ENCODE measurements at regions of chr14 and their contacts with region 1.

Region 1: GRCh38 chr14:101947906-101948665 is 16.3 kb upstream of the DYNC1H1 start:
- DNase-seq: peak; percentile 100
- H3K4me3 ChIP-seq: peak overlapping the region; percentile 50 to 97 (median 84)
- H3K27ac ChIP-seq: peak overlapping the region; percentile 89 to 100 (median 96)
- H3K4me1 ChIP-seq: peaks cover 14 to 18% of the 10 kb centered on the region in 2 donors
- H3K27me3 ChIP-seq: no peaks in the 10 kb centered on the region
- CTCF ChIP-seq: peak in 2 of 6 experiments; percentile 9 to 21
- POLR2A ChIP-seq: peak; percentile 77 to 94

Region 2: GRCh38 chr14:101767618-101768362 is 180.3 kb before region 1 on chr14:
- intact Hi-C with region 1: loop called (anchors 5 kb)
- DNase-seq: no peak
- H3K4me3 ChIP-seq: no peak overlapping the region
- H3K27ac ChIP-seq: no peak overlapping the region
- H3K4me1 ChIP-seq: peaks cover 0 to 32% of the 10 kb centered on the region in 2 donors
- H3K27me3 ChIP-seq: no peaks in the 10 kb centered on the region
- CTCF ChIP-seq: no peak
- POLR2A ChIP-seq: no peak

Region 3: DNA sequence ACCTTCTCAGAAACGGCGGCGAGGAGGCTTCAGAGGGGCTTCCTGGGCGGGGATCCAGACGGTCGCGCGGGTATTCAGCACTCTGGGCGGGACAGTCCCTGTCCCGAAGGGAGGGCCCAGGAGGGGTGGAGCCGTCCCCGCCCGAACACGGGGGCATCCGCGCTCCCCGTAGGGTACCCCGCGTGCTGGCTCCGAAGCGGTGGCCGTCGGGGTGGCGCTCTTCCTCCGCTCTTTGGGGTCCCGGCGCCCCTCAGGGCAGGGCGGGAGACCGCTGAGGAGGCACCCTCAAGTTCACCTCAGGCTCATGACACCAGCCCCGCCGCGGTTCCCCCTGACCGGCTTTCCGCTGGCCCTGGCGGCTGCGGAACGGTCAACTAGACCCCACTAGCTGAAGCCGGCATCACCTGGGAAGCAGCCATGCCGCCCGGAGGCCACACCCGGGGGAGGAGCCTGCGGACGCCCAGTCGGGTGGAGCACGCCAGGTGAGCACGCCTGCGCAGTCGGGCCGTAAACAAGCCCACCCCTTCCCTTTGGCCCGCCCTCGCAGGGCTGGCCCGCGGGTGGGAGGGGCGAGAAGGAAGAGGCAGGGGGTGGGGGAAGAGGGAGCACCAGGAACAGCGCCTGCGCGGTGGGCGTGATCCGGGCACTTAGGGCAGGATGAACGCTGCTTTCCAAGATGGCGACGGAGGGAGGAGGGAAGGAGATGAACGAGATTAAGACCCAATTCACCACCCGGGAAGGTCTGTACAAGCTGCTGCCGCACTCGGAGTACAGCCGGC is 191.4 kb after region 1 on chr14 and contains the start of gene WDR20:
- intact Hi-C with region 1: no loop called
- DNase-seq: peak; percentile 98 to 99
- H3K4me3 ChIP-seq: peak within 1 kb of the TSS; percentile 83 to 96 (median 89)
- H3K27ac ChIP-seq: peak within 1 kb of the TSS; percentile 68 to 87 (median 81)
- H3K4me1 ChIP-seq: peaks cover 6 to 16% of the 10 kb centered on the region in 2 donors
- H3K27me3 ChIP-seq: no peaks in the 10 kb centered on the region
- CTCF ChIP-seq: no peak
- POLR2A ChIP-seq: peak in 1 of 2 donors; percentile 76
- total RNA-seq, gene WDR20: 27.1 to 48.8 (median 37.6) TPM